ENCODE measurements at regions of chr16 and their contacts with region 1.

Region 1: DNA sequence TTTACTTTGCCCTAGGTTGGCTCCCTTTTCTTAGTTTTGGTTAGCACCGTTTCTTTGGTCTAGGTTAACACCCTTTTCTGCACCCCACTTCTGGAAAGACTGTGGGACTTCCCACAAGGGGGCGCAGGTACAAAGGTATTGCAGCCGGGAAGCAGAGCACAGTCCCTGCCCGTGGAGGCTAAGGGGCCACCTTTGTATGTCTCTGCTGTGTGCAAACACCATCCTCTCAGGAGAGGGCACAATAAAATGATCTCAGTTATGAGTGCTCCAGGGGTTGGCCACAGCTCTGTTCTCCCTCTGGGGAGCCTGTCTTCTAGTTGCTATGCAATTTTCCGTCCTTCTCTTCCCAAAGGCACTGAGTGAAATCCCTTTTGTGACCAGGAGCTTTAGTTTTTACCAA is 28.4 kb upstream of the TMC5 start:
- DNase-seq: peak; percentile 53 to 65 (median 65)
- H3K4me3 ChIP-seq: no peak overlapping the region
- H3K27ac ChIP-seq: no peak overlapping the region
- H3K4me1 ChIP-seq: no peaks in the 10 kb centered on the region
- H3K27me3 ChIP-seq: peaks cover 0 to 29% (median 6%) of the 10 kb centered on the region in 5 experiments

Region 2: GRCh38 chr16:19323596-19323995 is 65.7 kb before region 1 on chr16:
- CTCF ChIA-PET with region 1: no interaction called
- POLR2A ChIA-PET with region 1: no interaction called
- DNase-seq: no peak
- H3K4me3 ChIP-seq: no peak overlapping the region
- H3K27ac ChIP-seq: no peak overlapping the region
- H3K4me1 ChIP-seq: no peaks in the 10 kb centered on the region
- H3K27me3 ChIP-seq: no peaks in the 10 kb centered on the region

Region 3: DNA sequence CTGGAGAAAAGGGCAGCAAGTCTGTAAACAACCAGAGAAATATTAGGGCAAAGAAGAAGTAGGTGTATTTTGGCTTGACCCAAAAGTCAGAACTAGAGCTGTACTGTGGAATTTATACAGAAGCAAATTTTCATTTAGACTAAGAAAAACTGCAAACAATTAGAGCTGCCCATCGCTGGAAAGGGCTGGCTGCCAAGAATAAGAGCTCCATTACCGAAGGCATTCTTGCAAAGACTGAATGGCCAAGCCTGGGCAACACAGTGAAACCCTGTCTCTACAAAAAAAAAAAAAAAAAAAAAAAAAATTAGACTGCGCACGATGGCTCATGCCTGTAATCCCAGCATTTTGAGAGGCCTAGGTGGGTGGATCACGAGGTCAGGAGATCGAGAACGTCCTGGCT is 25.5 kb before region 1 on chr16:
- CTCF ChIA-PET with region 1: no interaction called
- POLR2A ChIA-PET with region 1: no interaction called
- DNase-seq: no peak
- H3K4me3 ChIP-seq: no peak overlapping the region
- H3K27ac ChIP-seq: no peak overlapping the region
- H3K4me1 ChIP-seq: no peaks in the 10 kb centered on the region
- H3K27me3 ChIP-seq: peaks cover 0 to 2% (median 0%) of the 10 kb centered on the region in 5 experiments

Region 4: GRCh38 chr16:19463487-19463886 is 74.2 kb after region 1 on chr16:
- CTCF ChIA-PET with region 1: no interaction called
- POLR2A ChIA-PET with region 1: no interaction called
- DNase-seq: no peak
- H3K4me3 ChIP-seq: no peak overlapping the region
- H3K27ac ChIP-seq: no peak overlapping the region
- H3K4me1 ChIP-seq: no peaks in the 10 kb centered on the region
- H3K27me3 ChIP-seq: no peaks in the 10 kb centered on the region

Region 5: GRCh38 chr16:19502395-19503131 is 113.3 kb after region 1 on chr16:
- CTCF ChIA-PET with region 1: interaction called, 66 read pairs
- POLR2A ChIA-PET with region 1: no interaction called
- DNase-seq: peak; percentile 79 to 89 (median 83)
- H3K4me3 ChIP-seq: no peak overlapping the region
- H3K27ac ChIP-seq: no peak overlapping the region
- H3K4me1 ChIP-seq: no peaks in the 10 kb centered on the region
- H3K27me3 ChIP-seq: no peaks in the 10 kb centered on the region

Region 6: DNA sequence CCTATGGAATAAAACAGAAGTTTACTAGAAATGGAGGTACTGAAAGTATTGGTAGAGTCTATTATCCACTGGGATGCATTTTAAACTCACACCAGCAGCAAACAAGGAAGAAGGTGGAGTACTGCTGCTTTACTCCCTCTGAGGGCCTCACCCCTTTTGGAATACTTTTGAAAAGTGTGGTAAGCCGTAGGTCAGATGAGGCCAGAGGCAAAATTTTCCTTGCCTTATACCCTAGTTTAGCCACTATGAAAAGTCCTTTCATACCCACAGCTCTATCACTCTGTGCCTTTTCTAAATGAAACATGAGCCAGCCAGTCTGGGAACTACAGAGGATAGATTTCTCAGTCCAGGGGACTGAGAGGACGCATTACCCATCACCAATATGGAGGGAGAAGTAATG is 118.6 kb after region 1 on chr16:
- CTCF ChIA-PET with region 1: interaction called, 66 read pairs
- POLR2A ChIA-PET with region 1: no interaction called
- DNase-seq: no peak
- H3K4me3 ChIP-seq: no peak overlapping the region
- H3K27ac ChIP-seq: no peak overlapping the region
- H3K4me1 ChIP-seq: peaks cover 0 to under 1% (median 0%) of the 10 kb centered on the region in 4 experiments
- H3K27me3 ChIP-seq: no peaks in the 10 kb centered on the region